Panc1 (cell line): ENCODE measurements at regions of chr3 and their contacts with region 1.

Region 1: DNA sequence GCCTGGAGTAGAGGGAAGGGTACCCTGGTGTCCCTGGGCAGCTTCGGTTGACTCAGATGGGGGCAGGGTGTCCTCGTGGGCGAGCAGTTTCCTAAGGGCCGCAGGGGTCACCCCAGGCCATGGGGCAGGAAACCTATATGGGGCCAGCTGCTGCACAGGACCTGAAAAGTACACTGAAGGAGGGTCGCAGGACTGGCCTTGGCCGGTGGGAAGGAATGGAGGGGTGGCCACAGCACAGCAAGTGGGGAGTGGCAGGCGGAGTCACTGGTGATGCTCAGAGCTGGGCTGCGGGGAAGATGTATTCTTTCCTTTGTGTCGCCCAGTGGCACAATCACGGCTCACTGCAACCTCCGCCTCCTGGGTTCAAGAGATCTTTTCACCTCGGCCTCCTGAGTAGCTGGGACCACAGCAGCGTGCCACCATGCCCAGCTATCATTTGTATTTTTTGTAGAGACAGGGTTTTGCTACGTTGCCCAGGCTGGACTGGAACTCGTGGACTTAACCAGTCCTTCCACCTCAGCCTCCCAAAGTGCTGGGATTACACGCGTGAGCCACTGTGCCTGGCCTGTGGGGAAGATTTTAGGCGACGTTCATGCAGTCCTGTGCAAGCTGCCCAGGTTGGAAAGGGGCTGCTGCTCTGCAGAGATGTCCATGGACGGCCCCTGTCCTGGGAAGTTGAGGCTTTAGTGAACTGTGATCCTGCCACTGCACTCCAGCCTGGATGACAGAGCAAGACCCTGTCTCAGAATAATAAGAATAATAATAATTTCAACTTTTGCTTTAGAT is 57.2 kb downstream of the EFCAB12 start:
- DNase-seq: no peak
- ATAC-seq: peak; percentile 41; the same call in 1 of the 2 replicates
- H3K4me3 ChIP-seq: no peak overlapping the region
- H3K27ac ChIP-seq: no peak overlapping the region
- H3K4me1 ChIP-seq: no peaks in the 10 kb centered on the region
- H3K27me3 ChIP-seq: no peaks in the 10 kb centered on the region
- CTCF ChIP-seq: no peak

Region 2: GRCh38 chr3:129519449-129519848 is 148.2 kb after region 1 on chr3:
- CTCF ChIA-PET with region 1: no interaction called
- POLR2A ChIA-PET with region 1: interaction called, 16 read pairs
- in situ Hi-C with region 1: no loop called
- intact Hi-C with region 1: no loop called
- DNase-seq: no peak
- ATAC-seq: no peak
- H3K4me3 ChIP-seq: no peak overlapping the region
- H3K27ac ChIP-seq: no peak overlapping the region
- H3K4me1 ChIP-seq: no peaks in the 10 kb centered on the region
- H3K27me3 ChIP-seq: no peaks in the 10 kb centered on the region
- CTCF ChIP-seq: no peak